Panc1 (cell line): ENCODE measurements at regions of chr21 and their contacts with region 1.

Region 1: GRCh38 chr21:34221331-34222030 is 142.3 kb upstream of the KCNE2 start:
- DNase-seq: no peak
- ATAC-seq: no peak
- H3K4me3 ChIP-seq: no peak overlapping the region
- H3K27ac ChIP-seq: no peak overlapping the region
- H3K4me1 ChIP-seq: no peaks in the 10 kb centered on the region
- H3K27me3 ChIP-seq: no peaks in the 10 kb centered on the region
- CTCF ChIP-seq: no peak

Region 2: GRCh38 chr21:34148826-34149558 is 72.5 kb before region 1 on chr21:
- CTCF ChIA-PET with region 1: no interaction called
- POLR2A ChIA-PET with region 1: no interaction called
- in situ Hi-C with region 1: no loop called
- intact Hi-C with region 1: no loop called
- DNase-seq: no peak
- ATAC-seq: no peak
- H3K4me3 ChIP-seq: no peak overlapping the region
- H3K27ac ChIP-seq: no peak overlapping the region
- H3K4me1 ChIP-seq: no peaks in the 10 kb centered on the region
- H3K27me3 ChIP-seq: no peaks in the 10 kb centered on the region
- CTCF ChIP-seq: no peak

Region 3: GRCh38 chr21:35874131-35874530 is 1652.7 kb after region 1 on chr21:
- CTCF ChIA-PET with region 1: interaction called, 12 read pairs
- POLR2A ChIA-PET with region 1: no interaction called
- in situ Hi-C with region 1: no loop called
- intact Hi-C with region 1: no loop called
- DNase-seq: no peak
- ATAC-seq: no peak
- H3K4me3 ChIP-seq: no peak overlapping the region
- H3K27ac ChIP-seq: no peak overlapping the region
- H3K4me1 ChIP-seq: no peaks in the 10 kb centered on the region
- H3K27me3 ChIP-seq: no peaks in the 10 kb centered on the region
- CTCF ChIP-seq: no peak